Activated naive CD4-positive, alpha-beta T cell treated with anti-CD3 and anti-CD28 coated beads for 36 hours (primary cell): ENCODE measurements at regions of chrX and their contacts with region 1.

Region 1: GRCh38 chrX:79081895-79082512 is 62.5 kb upstream of the GPR174 start:
- DNase-seq: peak; percentile 55
- H3K4me3 Mint-ChIP-seq: peak overlapping the region; percentile 65
- H3K27ac Mint-ChIP-seq: peak overlapping the region; percentile 81
- H3K4me1 Mint-ChIP-seq: peaks cover 41% of the 10 kb centered on the region
- H3K27me3 Mint-ChIP-seq: no peaks in the 10 kb centered on the region

Region 2: GRCh38 chrX:78139160-78140123 is 942.6 kb before region 1 on chrX and contains the start of gene TAF9B:
- CTCF ChIA-PET with region 1: no interaction called
- intact Hi-C with region 1: loop called (anchors 10 kb)
- DNase-seq: peak; percentile 89
- H3K4me3 Mint-ChIP-seq: peak within 1 kb of the TSS; percentile 89
- H3K27ac Mint-ChIP-seq: peak within 1 kb of the TSS; percentile 90
- H3K4me1 Mint-ChIP-seq: peaks cover 4% of the 10 kb centered on the region
- H3K27me3 Mint-ChIP-seq: no peaks in the 10 kb centered on the region
- total RNA-seq, gene TAF9B: 25.9 to 27.2 TPM

Region 3: GRCh38 chrX:78595901-78596502 is 486.0 kb before region 1 on chrX:
- CTCF ChIA-PET with region 1: no interaction called
- intact Hi-C with region 1: loop called (anchors 2 kb)
- DNase-seq: peak; percentile 20
- H3K4me3 Mint-ChIP-seq: no peak overlapping the region
- H3K27ac Mint-ChIP-seq: no peak overlapping the region
- H3K4me1 Mint-ChIP-seq: no peaks in the 10 kb centered on the region
- H3K27me3 Mint-ChIP-seq: no peaks in the 10 kb centered on the region

Region 4: DNA sequence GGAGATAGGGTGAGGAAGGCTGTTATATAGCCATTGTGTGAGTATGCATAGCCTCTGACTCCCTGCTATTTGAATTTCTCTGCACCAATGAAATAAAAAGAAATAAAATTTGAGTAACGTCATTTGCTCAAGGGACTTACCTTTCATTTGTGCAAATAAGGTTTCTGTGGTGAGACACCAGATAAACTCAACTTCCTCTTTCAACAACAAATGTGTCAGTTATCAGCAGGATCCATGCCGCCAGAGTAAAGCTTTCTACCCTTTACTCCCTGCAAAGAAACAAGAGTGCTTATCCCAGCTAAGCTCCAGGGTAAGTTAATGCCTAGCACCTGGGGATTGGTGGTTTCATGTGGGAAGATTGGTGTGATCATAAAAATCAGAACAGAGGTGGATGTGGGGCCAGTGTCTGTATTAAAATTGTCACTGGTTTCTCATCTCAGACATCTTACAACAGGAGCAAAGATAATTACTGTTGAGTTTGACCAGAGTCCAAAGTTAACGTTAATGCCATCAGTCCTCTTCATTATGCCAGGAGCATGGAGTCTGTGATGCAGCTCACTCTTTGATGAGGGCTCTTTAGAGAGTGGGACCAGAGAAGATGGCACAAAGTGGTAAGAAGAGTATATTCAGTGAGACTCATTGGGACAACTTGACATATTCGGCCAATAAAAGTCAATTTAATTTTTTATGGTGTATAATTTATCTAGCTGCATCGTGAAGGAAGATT is 136.7 kb before region 1 on chrX and contains the start of gene P2RY10:
- CTCF ChIA-PET with region 1: interaction called, 8 read pairs
- intact Hi-C with region 1: loop called (anchors 2 kb)
- DNase-seq: peak; percentile 45
- H3K4me3 Mint-ChIP-seq: peak within 1 kb of the TSS; percentile 94
- H3K27ac Mint-ChIP-seq: peak within 1 kb of the TSS; percentile 98
- H3K4me1 Mint-ChIP-seq: peaks cover 54% of the 10 kb centered on the region
- H3K27me3 Mint-ChIP-seq: no peaks in the 10 kb centered on the region
- total RNA-seq, gene P2RY10: 61.9 to 63.3 TPM

Region 5: DNA sequence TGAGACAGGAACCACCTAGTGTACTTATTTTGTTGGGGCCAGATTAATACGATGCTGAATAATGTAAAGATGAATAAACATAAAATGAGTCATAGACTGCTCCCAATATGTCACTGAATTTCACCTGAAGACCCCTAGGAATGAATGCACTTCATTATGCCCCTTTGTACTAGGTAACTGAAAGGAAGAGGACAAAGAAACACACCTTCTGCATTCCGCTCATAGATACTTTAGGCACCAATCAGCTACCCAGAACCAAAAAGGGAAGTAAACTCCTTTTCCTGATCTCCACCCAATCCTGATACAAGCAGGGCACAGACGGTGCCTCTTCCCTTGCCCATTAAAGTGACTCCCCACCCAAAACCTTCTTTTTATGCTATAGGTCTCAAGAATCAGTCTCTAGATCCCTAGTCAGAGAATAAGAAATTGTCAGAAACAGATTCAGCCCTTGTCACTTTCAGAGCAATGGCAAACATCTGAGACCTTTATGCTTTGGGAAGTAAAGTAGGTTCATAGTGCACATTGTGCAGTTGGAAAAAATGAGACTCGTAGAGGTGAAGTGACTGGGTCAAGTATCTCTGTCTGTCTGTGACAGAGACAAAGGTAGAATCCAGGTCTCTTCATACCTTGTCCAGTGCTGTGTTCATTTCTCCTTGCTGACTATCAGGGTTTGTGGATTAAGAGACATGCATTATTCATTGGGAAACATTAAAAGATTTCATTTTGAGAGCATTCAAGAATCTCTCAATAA is 64.8 kb after region 1 on chrX:
- CTCF ChIA-PET with region 1: interaction called, 6 read pairs
- intact Hi-C with region 1: loop called (anchors 2 kb)
- DNase-seq: no peak
- H3K4me3 Mint-ChIP-seq: peak overlapping the region; percentile 93
- H3K27ac Mint-ChIP-seq: peak overlapping the region; percentile 96
- H3K4me1 Mint-ChIP-seq: peaks cover 31% of the 10 kb centered on the region
- H3K27me3 Mint-ChIP-seq: no peaks in the 10 kb centered on the region

Region 6: GRCh38 chrX:79412972-79413371 is 331.0 kb after region 1 on chrX:
- CTCF ChIA-PET with region 1: interaction called, 6 read pairs
- intact Hi-C with region 1: loop called (anchors 2 kb)
- DNase-seq: no peak
- H3K4me3 Mint-ChIP-seq: peak overlapping the region; percentile 66
- H3K27ac Mint-ChIP-seq: peak overlapping the region; percentile 69
- H3K4me1 Mint-ChIP-seq: peaks cover 21% of the 10 kb centered on the region
- H3K27me3 Mint-ChIP-seq: no peaks in the 10 kb centered on the region